AG04450 (cell line): ENCODE measurements at regions of chr1 and their contacts with region 1.

Region 1: GRCh38 chr1:230084138-230084880 is 17.3 kb downstream of the GALNT2 start:
- DNase-seq: peak; percentile 96
- H3K4me3 ChIP-seq: peak overlapping the region; percentile 34
- H3K27ac ChIP-seq: peak overlapping the region; percentile 92
- H3K27me3 ChIP-seq: no peaks in the 10 kb centered on the region
- CTCF ChIP-seq: no peak

Region 2: GRCh38 chr1:229862017-229862774 is 222.1 kb before region 1 on chr1:
- CTCF ChIA-PET with region 1: no interaction called
- POLR2A ChIA-PET with region 1: no interaction called
- DNase-seq: no peak
- H3K4me3 ChIP-seq: no peak overlapping the region
- H3K27ac ChIP-seq: no peak overlapping the region
- H3K27me3 ChIP-seq: no peaks in the 10 kb centered on the region
- CTCF ChIP-seq: no peak

Region 3: DNA sequence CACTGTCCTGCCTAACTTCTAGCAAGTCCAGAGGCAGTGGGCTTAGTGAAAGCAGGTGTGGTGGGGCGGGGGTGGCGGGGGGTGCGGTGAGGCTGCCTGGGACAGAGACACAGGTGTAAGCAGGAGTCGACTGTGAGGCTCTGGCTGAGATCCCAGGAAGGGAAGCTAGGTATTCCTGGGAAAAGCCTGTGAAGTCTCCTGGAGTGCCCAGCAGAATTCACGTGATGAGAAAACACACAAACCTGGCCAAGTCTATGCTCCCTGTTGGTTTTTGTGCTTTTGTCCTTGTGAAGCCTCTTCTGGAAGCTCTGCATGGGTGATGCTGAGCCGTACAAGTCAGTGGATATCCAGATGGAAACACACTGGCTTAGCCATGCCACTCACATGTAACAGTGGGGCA is 12.0 kb before region 1 on chr1:
- CTCF ChIA-PET with region 1: no interaction called
- POLR2A ChIA-PET with region 1: interaction called, 10 read pairs
- DNase-seq: no peak
- H3K4me3 ChIP-seq: no peak overlapping the region
- H3K27ac ChIP-seq: no peak overlapping the region
- H3K27me3 ChIP-seq: no peaks in the 10 kb centered on the region
- CTCF ChIP-seq: no peak

Region 4: GRCh38 chr1:230104395-230105244 is 20.3 kb after region 1 on chr1:
- CTCF ChIA-PET with region 1: no interaction called
- POLR2A ChIA-PET with region 1: interaction called, 16 read pairs
- DNase-seq: peak; percentile 95
- H3K4me3 ChIP-seq: peak overlapping the region; percentile 34
- H3K27ac ChIP-seq: peak overlapping the region; percentile 93
- H3K27me3 ChIP-seq: no peaks in the 10 kb centered on the region
- CTCF ChIP-seq: no peak